ENCODE measurements at regions of chrX and their contacts with region 1.

Region 1: GRCh38 chrX:120144178-120144844 is 14.1 kb upstream of the RHOXF2 start:
- DNase-seq: peak in 1 of 5 donors; percentile 35
- ATAC-seq: no peak
- H3K4me3 ChIP-seq: peak overlapping the region in 3 of 12 donors; percentile 7 to 19 (median 9)
- H3K27ac ChIP-seq: no peak overlapping the region
- H3K4me1 ChIP-seq: no peaks in the 10 kb centered on the region
- H3K27me3 ChIP-seq: peaks cover 0 to 7% (median 0%) of the 10 kb centered on the region in 9 donors
- CTCF ChIP-seq: no peak
- POLR2A ChIP-seq: no peak

Region 2: GRCh38 chrX:119981286-119982070 is 162.8 kb before region 1 on chrX:
- intact Hi-C with region 1: loop called in 1 of 10 experiments (anchors 5 kb)
- DNase-seq: no peak
- ATAC-seq: no peak
- H3K4me3 ChIP-seq: no peak overlapping the region
- H3K27ac ChIP-seq: no peak overlapping the region
- H3K4me1 ChIP-seq: no peaks in the 10 kb centered on the region
- H3K27me3 ChIP-seq: peaks cover 0 to 24% (median 0%) of the 10 kb centered on the region in 9 donors
- CTCF ChIP-seq: peak in 6 of 12 donors; percentile 11 to 32 (median 28)
- POLR2A ChIP-seq: no peak

Region 3: DNA sequence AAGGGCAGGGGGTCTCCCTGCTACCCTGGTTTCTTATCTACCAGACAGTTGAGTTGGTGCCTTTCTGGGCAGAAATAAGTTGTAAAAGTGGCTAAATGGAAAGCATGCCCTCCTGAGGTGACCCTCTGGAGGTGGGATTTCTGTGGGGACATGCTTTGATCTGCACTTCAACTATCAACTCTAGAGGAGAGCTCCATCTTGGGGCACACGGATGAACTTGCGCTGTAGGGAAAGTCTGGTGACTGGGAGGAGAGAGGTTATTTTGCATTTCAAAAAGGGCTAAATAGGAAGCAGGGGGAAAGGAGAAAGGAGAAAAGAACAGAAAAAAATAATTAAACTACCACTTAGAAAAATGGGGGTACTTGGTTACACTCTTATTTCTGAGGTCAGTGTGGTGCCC is 54.1 kb before region 1 on chrX:
- intact Hi-C with region 1: loop called in 1 of 10 experiments (anchors 10 kb)
- DNase-seq: no peak
- ATAC-seq: no peak
- H3K4me3 ChIP-seq: no peak overlapping the region
- H3K27ac ChIP-seq: no peak overlapping the region
- H3K4me1 ChIP-seq: no peaks in the 10 kb centered on the region
- H3K27me3 ChIP-seq: peaks cover 0 to 4% (median 0%) of the 10 kb centered on the region in 9 donors
- CTCF ChIP-seq: no peak
- POLR2A ChIP-seq: no peak

Region 4: GRCh38 chrX:120228187-120228908 is 84.0 kb after region 1 on chrX:
- intact Hi-C with region 1: loop called in 1 of 10 experiments (anchors 10 kb)
- DNase-seq: no peak
- ATAC-seq: no peak
- H3K4me3 ChIP-seq: no peak overlapping the region
- H3K27ac ChIP-seq: no peak overlapping the region
- H3K4me1 ChIP-seq: no peaks in the 10 kb centered on the region
- H3K27me3 ChIP-seq: no peaks in the 10 kb centered on the region
- CTCF ChIP-seq: no peak
- POLR2A ChIP-seq: no peak

Region 5: DNA sequence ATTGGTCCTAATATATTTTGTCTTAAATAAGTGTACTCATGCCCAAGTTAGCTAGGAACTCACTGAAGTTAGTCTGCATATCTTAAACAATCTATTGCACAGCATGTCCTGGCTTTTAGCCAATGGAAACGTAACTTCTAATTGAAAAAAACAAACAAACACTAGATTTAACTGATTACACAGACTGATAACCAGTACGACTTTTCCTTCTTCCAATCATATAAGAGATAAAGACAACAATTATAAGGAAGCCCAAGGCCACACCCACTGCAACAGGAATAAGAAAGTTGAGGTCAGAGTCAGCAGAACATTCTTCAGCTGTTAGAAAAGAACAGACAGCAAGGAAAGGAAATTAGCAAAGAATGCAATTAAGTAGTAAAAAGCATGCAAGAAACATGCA is 284.0 kb after region 1 on chrX:
- intact Hi-C with region 1: no loop called
- DNase-seq: no peak
- ATAC-seq: no peak
- H3K4me3 ChIP-seq: no peak overlapping the region
- H3K27ac ChIP-seq: no peak overlapping the region
- H3K4me1 ChIP-seq: peaks cover 0 to 10% (median 0%) of the 10 kb centered on the region in 12 donors
- H3K27me3 ChIP-seq: no peaks in the 10 kb centered on the region
- CTCF ChIP-seq: no peak
- POLR2A ChIP-seq: no peak

Measured in heart left ventricle (tissue), 16 donors.